ENCODE measurements at regions of chr7 and their contacts with region 1.

Region 1: GRCh38 chr7:129224251-129225205 is at the start of gene AHCYL2:
- DNase-seq: peak; percentile 99
- ATAC-seq: peak; percentile 93
- H3K4me3 Mint-ChIP-seq: peak within 1 kb of the TSS; percentile 83
- H3K27ac Mint-ChIP-seq: peak within 1 kb of the TSS; percentile 95
- H3K4me1 Mint-ChIP-seq: peaks cover 30% of the 10 kb centered on the region
- H3K27me3 Mint-ChIP-seq: no peaks in the 10 kb centered on the region
- total RNA-seq, gene AHCYL2: 14.1 to 14.9 TPM

Region 2: DNA sequence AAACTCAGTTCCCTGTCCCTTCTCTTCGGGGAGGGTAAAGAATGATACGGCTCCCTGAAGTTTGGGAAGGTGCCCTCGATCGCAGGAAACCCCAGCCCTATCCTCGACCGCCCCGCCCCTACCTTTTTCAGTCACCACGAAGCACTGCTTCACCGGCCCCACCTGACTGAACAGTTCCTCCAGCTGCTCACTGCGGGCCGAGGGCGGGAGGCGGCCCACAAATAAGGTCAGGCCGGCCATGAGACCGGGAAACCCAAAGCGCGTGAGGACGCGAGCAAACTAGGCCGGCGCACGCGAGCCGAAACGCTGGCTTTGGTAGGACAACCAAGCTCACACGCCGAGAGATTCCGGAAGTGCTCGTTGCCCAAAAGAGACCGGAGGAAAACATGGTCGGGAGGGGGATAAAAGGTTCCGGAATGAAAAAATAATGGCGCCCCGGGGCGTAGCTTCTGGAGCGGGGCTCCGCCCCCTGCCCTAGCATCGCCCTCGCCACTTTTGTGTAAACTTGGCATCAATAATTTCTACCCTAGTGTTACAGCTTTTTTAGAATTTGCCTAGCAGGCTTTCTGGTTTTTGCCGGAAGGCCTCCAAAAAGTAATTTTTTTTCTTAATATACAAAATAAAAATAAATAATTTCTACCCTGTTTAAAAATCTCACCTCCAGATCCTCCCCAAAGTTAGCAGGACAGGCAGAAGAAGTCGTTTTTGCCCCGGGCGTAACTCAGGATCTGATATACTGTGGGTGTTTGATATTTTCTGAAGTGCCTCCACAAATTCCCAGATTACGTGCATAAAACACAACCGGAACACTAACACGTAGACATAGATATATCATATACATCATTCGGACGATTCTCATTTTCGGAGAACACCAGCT is 880.7 kb before region 1 on chr7 and contains the start of gene RBM28:
- CTCF ChIA-PET with region 1: no interaction called
- POLR2A ChIA-PET with region 1: no interaction called
- intact Hi-C with region 1: loop called in 1 of 2 experiments (anchors 5 kb)
- DNase-seq: peak; percentile 90
- ATAC-seq: peak; percentile 96
- H3K4me3 Mint-ChIP-seq: peak within 1 kb of the TSS; percentile 84
- H3K27ac Mint-ChIP-seq: peak within 1 kb of the TSS; percentile 91
- H3K4me1 Mint-ChIP-seq: peaks cover 25% of the 10 kb centered on the region
- H3K27me3 Mint-ChIP-seq: peaks cover 9% of the 10 kb centered on the region
- total RNA-seq, gene RBM28: 55.0 to 55.2 TPM

Region 3: DNA sequence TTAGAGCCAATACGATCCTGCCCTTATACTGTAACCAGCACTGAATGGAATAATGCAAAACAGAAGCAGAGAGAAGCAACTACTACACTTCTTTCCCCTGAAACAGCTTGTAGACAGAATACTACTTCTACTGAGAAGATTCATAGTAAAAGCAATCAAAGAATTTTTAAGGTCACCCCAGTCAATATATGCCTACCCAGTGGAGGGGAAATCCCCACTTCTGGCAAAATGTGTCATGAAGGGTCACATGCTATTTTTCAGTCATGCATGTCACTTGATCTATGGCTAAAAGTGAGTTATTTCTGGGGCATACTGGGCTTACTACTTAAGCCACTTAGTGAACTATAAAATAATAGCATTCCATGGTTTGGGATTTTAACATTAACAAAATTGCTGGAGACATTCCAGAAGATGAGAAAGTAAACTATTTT is 261.2 kb before region 1 on chr7:
- CTCF ChIA-PET with region 1: no interaction called
- POLR2A ChIA-PET with region 1: no interaction called
- intact Hi-C with region 1: loop called in 1 of 2 experiments (anchors 1 kb)
- DNase-seq: peak; percentile 70
- ATAC-seq: peak; percentile 85
- H3K4me3 Mint-ChIP-seq: peak overlapping the region; percentile 21
- H3K27ac Mint-ChIP-seq: peak overlapping the region; percentile 93
- H3K4me1 Mint-ChIP-seq: peaks cover 35% of the 10 kb centered on the region
- H3K27me3 Mint-ChIP-seq: no peaks in the 10 kb centered on the region

Region 4: DNA sequence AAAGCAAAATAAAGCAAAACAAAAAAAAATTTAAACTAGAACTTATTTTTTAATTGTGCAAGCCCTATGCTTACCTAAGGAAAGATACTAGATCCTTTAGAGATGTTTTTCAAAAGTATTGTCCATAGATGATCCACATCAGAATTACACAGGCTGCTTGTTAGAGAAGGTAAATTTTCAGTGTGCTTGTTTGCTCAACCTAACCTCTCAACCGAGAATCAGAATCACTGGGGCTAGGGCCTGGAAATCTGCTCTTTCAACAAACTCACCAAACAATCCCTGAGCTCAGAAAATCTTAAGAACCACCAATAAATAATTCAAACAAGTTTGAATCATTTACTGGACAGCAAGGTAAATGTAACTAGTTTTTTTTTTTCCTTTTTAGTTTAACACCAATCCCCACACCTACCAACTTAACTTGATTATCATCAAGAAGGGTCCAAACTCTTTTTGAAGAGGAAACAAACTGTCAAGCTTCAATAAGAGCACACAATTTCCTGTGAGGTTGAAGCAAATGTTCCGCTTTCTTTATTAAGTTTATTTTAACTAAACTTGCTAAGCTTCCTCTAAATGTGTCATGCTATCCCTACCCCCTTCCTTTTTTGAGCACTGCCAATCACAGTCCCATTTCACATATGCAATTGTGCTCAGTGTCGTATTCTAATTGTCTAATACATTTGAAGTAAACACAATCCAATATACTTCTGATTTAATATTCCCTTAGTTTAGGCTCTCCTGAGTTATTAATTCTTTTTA is 87.5 kb before region 1 on chr7:
- CTCF ChIA-PET with region 1: no interaction called
- POLR2A ChIA-PET with region 1: no interaction called
- intact Hi-C with region 1: no loop called
- DNase-seq: no peak
- ATAC-seq: peak; percentile 53
- H3K4me3 Mint-ChIP-seq: no peak overlapping the region
- H3K27ac Mint-ChIP-seq: peak overlapping the region; percentile 79
- H3K4me1 Mint-ChIP-seq: peaks cover 23% of the 10 kb centered on the region
- H3K27me3 Mint-ChIP-seq: no peaks in the 10 kb centered on the region

Region 5: DNA sequence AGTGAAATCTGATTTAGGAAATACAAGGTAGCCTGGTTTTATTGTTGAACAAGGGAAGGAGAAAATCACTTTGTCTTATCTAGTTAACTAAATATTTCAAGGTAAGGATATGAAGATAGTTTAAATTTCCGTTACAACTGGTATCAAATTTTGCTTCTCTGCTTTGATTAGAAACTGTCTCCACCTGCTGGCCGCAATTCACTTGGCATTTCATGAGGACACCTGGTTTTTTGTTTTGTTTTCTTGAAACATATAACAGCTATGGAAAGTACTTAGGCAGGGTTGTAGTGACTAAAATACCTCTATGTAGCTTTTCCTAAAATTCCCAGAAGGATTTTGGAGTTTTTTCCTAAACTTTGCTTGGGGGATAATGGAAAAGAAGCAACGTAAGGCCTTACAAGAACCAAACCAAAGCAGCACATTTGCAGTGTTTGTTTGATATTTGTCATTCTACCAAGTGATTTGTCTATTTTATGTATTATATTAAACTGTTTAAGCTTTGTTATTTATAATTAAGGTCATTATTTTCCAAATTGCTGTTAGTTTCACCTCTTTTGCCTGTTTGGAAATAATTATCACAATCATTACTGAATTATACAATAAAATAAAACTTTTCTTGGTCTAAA is 73.9 kb after region 1 on chr7:
- CTCF ChIA-PET with region 1: interaction called, 151 read pairs
- POLR2A ChIA-PET with region 1: no interaction called
- intact Hi-C with region 1: no loop called
- DNase-seq: peak; percentile 75
- ATAC-seq: no peak
- H3K4me3 Mint-ChIP-seq: no peak overlapping the region
- H3K27ac Mint-ChIP-seq: no peak overlapping the region
- H3K4me1 Mint-ChIP-seq: peaks cover 2% of the 10 kb centered on the region
- H3K27me3 Mint-ChIP-seq: no peaks in the 10 kb centered on the region

Region 6: DNA sequence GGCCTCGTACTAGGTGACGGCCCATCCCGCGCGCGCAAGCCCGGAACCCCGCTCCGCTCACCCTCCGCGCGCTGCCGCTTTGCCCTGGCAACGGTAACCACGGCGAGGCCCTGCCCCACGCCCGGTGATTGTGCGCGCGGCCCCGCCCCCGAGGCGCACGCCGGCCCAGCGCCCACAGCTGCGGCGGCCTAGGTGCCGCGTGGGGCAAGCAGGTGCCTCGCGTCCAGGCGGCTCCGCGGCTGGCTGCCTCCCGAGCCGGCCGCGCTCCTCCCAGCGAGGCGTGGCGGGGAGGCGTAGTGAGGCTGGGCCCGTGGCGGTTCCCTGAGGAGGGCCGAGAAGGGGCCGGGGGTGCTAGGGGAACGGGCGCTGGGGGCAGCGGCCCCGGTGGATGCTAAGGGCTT is 277.8 kb after region 1 on chr7 and contains the start of gene SMKR1:
- CTCF ChIA-PET with region 1: no interaction called
- POLR2A ChIA-PET with region 1: no interaction called
- intact Hi-C with region 1: loop called in 1 of 2 experiments (anchors 1 kb)
- DNase-seq: peak; percentile 91
- ATAC-seq: peak; percentile 95
- H3K4me3 Mint-ChIP-seq: peak within 1 kb of the TSS; percentile 71
- H3K27ac Mint-ChIP-seq: peak within 1 kb of the TSS; percentile 73
- H3K4me1 Mint-ChIP-seq: peaks cover 11% of the 10 kb centered on the region
- H3K27me3 Mint-ChIP-seq: no peaks in the 10 kb centered on the region
- total RNA-seq, gene SMKR1: 2.3 to 2.7 TPM

Region 7: GRCh38 chr7:129825496-129826267 is 601.2 kb after region 1 on chr7:
- CTCF ChIA-PET with region 1: no interaction called
- POLR2A ChIA-PET with region 1: no interaction called
- intact Hi-C with region 1: loop called in 1 of 2 experiments (anchors 2 kb)
- DNase-seq: peak; percentile 95
- ATAC-seq: peak; percentile 75
- H3K4me3 Mint-ChIP-seq: peak overlapping the region; percentile 86
- H3K27ac Mint-ChIP-seq: peak overlapping the region; percentile 55
- H3K4me1 Mint-ChIP-seq: peaks cover 17% of the 10 kb centered on the region
- H3K27me3 Mint-ChIP-seq: no peaks in the 10 kb centered on the region

Region 8: GRCh38 chr7:130069978-130070860 is 845.7 kb after region 1 on chr7 and contains the start of gene KLHDC10:
- CTCF ChIA-PET with region 1: no interaction called
- POLR2A ChIA-PET with region 1: no interaction called
- intact Hi-C with region 1: loop called in 1 of 2 experiments (anchors 1 kb)
- DNase-seq: peak; percentile 97
- ATAC-seq: peak; percentile 98
- H3K4me3 Mint-ChIP-seq: peak within 1 kb of the TSS; percentile 91
- H3K27ac Mint-ChIP-seq: peak within 1 kb of the TSS; percentile 90
- H3K4me1 Mint-ChIP-seq: peaks cover 32% of the 10 kb centered on the region
- H3K27me3 Mint-ChIP-seq: no peaks in the 10 kb centered on the region
- total RNA-seq, gene KLHDC10: 13.5 to 14.2 TPM

Measured in activated CD4-positive, alpha-beta T cell treated with anti-CD3 and anti-CD28 coated beads for 36 hours (primary cell).